Breast epithelium (tissue), 4 donors: ENCODE measurements at regions of chr2 and their contacts with region 1.

Region 1: DNA sequence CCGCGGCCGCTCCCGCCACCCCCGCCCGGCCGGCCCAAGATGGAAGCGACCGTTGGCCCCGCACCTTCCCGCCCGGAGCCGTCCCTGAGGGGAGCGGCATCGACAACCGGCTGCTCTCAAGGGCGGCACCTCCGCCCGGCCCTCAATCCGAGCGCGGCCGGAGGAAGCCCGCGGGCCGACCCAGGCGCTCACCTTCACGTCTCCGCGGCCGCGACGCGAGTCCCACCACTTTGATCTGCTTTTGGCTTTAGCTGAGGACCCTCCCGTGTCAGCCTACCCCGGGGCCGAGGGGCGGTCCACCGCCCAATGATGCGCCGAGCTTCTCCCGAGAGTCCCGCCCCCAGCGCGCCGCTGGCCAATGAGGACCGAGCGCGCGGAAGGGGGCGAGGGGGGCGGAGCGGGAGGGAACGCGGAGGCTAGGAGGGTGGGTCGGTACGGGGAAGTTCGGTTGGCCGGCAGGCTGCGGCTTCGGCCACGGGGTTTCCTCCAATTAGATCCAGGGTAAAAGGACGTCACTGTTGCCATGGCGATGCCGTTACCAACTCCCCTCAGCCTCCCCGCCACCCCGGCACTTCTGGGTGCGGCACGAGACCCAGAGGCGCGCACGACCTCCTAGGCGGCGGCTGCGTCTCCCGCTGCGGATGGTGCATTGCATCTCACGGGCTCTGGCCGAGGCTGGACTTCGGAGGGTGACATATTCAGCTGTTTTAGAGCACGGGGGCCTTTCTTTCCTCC is at the start of gene YWHAQ:
- DNase-seq: peak; percentile 97 to 98
- H3K4me3 ChIP-seq: peak within 1 kb of the TSS; percentile 82 to 96 (median 83)
- H3K27ac ChIP-seq: peak within 1 kb of the TSS; percentile 96
- H3K4me1 ChIP-seq: peaks cover 0 to 18% of the 10 kb centered on the region in 2 donors
- H3K27me3 ChIP-seq: no peaks in the 10 kb centered on the region
- CTCF ChIP-seq: no peak
- POLR2A ChIP-seq: peak; percentile 62
- total RNA-seq, gene YWHAQ: 176 to 226 (median 186) TPM

Region 2: GRCh38 chr2:9555297-9556141 is 75.4 kb before region 1 on chr2 and contains the start of gene ADAM17:
- intact Hi-C with region 1: loop called (anchors 10 kb)
- DNase-seq: peak; percentile 95 to 96
- H3K4me3 ChIP-seq: peak within 1 kb of the TSS; percentile 74 to 98 (median 88)
- H3K27ac ChIP-seq: peak within 1 kb of the TSS; percentile 99 to 100
- H3K4me1 ChIP-seq: peaks cover 3 to 7% of the 10 kb centered on the region in 2 donors
- H3K27me3 ChIP-seq: no peaks in the 10 kb centered on the region
- CTCF ChIP-seq: peak in 2 of 3 donors; percentile 41 to 70
- POLR2A ChIP-seq: peak; percentile 79
- total RNA-seq, gene ADAM17: 32.2 to 65.9 (median 48.8) TPM

Region 3: GRCh38 chr2:9596621-9597311 is 34.1 kb before region 1 on chr2:
- intact Hi-C with region 1: no loop called
- DNase-seq: no peak
- H3K4me3 ChIP-seq: no peak overlapping the region
- H3K27ac ChIP-seq: no peak overlapping the region
- H3K4me1 ChIP-seq: peaks cover 0 to 6% of the 10 kb centered on the region in 2 donors
- H3K27me3 ChIP-seq: no peaks in the 10 kb centered on the region
- CTCF ChIP-seq: no peak
- POLR2A ChIP-seq: no peak

Region 4: DNA sequence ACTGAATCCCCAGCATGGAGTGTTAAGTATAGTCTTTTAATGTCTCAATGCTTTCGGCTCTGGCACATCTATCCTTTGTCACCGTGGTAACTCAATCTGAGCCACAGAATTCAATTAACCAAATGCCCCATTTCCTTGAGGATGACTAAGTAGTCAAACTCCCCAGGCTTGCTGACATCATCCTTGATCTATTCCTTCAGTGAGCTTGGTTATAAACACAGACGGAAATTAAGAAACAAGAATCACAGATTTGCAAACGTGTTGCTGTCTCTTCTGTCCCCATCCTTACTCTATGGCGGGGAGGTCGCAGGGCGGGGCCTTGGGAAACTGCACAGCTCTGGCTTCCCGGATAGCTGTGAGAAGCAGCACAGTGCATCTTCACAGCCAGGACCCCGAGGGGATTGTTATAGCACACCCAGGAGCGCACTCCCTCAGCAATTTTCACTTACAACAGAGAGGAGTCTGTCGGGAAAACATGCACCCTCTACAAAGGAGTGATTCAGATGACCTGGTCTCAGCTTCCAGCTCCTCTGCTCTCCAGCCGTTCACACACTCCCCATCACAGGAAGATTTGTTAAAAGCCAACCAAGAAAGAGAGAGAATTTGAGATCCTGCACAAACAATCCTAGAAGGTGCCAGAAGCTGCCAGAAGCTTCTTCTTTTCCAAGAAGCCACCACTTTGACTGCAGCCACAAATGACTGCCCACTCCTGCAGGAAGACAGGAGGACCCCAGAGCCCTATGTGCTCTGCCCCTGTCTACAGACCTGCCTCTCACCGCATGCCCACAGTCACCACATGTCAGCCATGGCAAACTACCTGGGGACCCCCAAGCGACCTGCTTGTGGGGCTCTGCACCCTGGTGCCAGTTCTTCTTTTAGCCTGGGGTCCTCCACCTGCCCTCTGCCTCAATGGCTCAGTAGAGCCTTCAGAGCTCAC is 44.8 kb after region 1 on chr2:
- intact Hi-C with region 1: no loop called
- DNase-seq: peak in 1 of 2 donors; percentile 34
- H3K4me3 ChIP-seq: peak overlapping the region in 1 of 3 donors; percentile 46
- H3K27ac ChIP-seq: peak overlapping the region; percentile 72 to 81
- H3K4me1 ChIP-seq: no peaks in the 10 kb centered on the region
- H3K27me3 ChIP-seq: no peaks in the 10 kb centered on the region
- CTCF ChIP-seq: no peak
- POLR2A ChIP-seq: no peak